B cell (primary cell): ENCODE measurements at regions of chr3 and their contacts with region 1.

Region 1: GRCh38 chr3:106255870-106256248 is 387.0 kb upstream of the CBLB start:
- DNase-seq: peak; percentile 83
- ATAC-seq: peak; percentile 97
- H3K4me3 ChIP-seq: peak overlapping the region in 4 of 5 experiments; percentile 59 to 71 (median 64)
- H3K4me3 Mint-ChIP-seq: peak overlapping the region; percentile 74
- H3K27ac ChIP-seq: peak overlapping the region; percentile 84 to 85
- H3K27ac Mint-ChIP-seq: peak overlapping the region; percentile 90
- H3K4me1 ChIP-seq: peaks cover 25 to 31% of the 10 kb centered on the region in 2 donors
- H3K4me1 Mint-ChIP-seq: peaks cover 38% of the 10 kb centered on the region
- H3K27me3 ChIP-seq: no peaks in the 10 kb centered on the region
- H3K27me3 Mint-ChIP-seq: no peaks in the 10 kb centered on the region
- CTCF ChIP-seq: no peak

Region 2: DNA sequence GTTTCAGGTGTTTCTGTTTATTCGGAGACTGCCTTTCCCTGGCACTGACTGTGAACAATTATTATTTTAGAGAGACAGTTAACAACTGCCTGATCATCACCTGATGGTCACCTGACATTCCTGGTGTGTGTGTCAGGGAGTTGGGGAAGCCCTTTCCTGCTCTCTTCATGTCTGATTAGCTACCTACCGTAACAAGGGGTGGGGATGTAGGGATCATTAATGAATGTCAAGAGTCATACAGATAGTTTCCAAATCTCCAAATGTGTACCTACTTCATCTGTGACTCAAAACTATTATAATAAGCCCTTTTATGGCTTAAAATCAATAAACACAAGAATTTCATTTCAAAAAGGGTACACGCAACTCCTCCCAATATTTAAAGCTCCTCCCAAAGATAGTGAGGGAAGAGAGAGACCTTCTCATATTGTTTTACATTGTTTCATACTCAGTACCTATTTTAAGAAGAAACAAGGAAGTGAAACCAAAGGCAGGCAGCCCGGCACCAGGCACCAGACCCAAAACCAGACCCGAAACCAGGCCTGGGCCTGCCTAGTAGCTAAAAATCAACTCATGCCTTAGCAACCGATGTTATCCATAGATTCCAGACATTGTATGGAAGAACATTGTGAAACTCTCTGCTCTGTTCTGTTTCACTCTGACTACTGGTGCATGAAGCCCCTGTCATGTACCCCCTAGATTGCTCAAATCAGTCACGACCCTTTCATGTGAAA is 1734.1 kb before region 1 on chr3:
- CTCF ChIA-PET with region 1: no interaction called
- POLR2A ChIA-PET with region 1: no interaction called
- intact Hi-C with region 1: loop called (anchors 10 kb)
- DNase-seq: peak; percentile 85
- ATAC-seq: peak; percentile 58
- H3K4me3 ChIP-seq: peak overlapping the region in 1 of 5 experiments; percentile 12
- H3K4me3 Mint-ChIP-seq: peak overlapping the region; percentile 82
- H3K27ac ChIP-seq: peak overlapping the region; percentile 93 to 98
- H3K27ac Mint-ChIP-seq: peak overlapping the region; percentile 98
- H3K4me1 ChIP-seq: peaks cover 70 to 71% of the 10 kb centered on the region in 2 donors
- H3K4me1 Mint-ChIP-seq: peaks cover 69% of the 10 kb centered on the region
- H3K27me3 ChIP-seq: no peaks in the 10 kb centered on the region
- H3K27me3 Mint-ChIP-seq: no peaks in the 10 kb centered on the region
- CTCF ChIP-seq: no peak

Region 3: GRCh38 chr3:105722943-105723556 is 532.8 kb before region 1 on chr3:
- CTCF ChIA-PET with region 1: no interaction called
- POLR2A ChIA-PET with region 1: no interaction called
- intact Hi-C with region 1: loop called (anchors 5 kb)
- DNase-seq: peak; percentile 77
- ATAC-seq: peak; percentile 96
- H3K4me3 ChIP-seq: peak overlapping the region in 1 of 5 experiments; percentile 29
- H3K4me3 Mint-ChIP-seq: peak overlapping the region; percentile 26
- H3K27ac ChIP-seq: peak overlapping the region in 1 of 2 donors; percentile 35
- H3K27ac Mint-ChIP-seq: peak overlapping the region; percentile 51
- H3K4me1 ChIP-seq: peaks cover 4 to 15% of the 10 kb centered on the region in 2 donors
- H3K4me1 Mint-ChIP-seq: peaks cover 18% of the 10 kb centered on the region
- H3K27me3 ChIP-seq: no peaks in the 10 kb centered on the region
- H3K27me3 Mint-ChIP-seq: no peaks in the 10 kb centered on the region
- CTCF ChIP-seq: no peak

Region 4: GRCh38 chr3:106176734-106177133 is 79.1 kb before region 1 on chr3:
- CTCF ChIA-PET with region 1: no interaction called
- POLR2A ChIA-PET with region 1: no interaction called
- intact Hi-C with region 1: loop called (anchors 5 kb)
- DNase-seq: peak; percentile 46
- ATAC-seq: peak; percentile 85
- H3K4me3 ChIP-seq: peak overlapping the region in 4 of 5 experiments; percentile 35 to 44 (median 38)
- H3K4me3 Mint-ChIP-seq: peak overlapping the region; percentile 83
- H3K27ac ChIP-seq: peak overlapping the region; percentile 30 to 68
- H3K27ac Mint-ChIP-seq: peak overlapping the region; percentile 78
- H3K4me1 ChIP-seq: peaks cover 7 to 20% of the 10 kb centered on the region in 2 donors
- H3K4me1 Mint-ChIP-seq: peaks cover 26% of the 10 kb centered on the region
- H3K27me3 ChIP-seq: no peaks in the 10 kb centered on the region
- H3K27me3 Mint-ChIP-seq: no peaks in the 10 kb centered on the region
- CTCF ChIP-seq: no peak

Region 5: DNA sequence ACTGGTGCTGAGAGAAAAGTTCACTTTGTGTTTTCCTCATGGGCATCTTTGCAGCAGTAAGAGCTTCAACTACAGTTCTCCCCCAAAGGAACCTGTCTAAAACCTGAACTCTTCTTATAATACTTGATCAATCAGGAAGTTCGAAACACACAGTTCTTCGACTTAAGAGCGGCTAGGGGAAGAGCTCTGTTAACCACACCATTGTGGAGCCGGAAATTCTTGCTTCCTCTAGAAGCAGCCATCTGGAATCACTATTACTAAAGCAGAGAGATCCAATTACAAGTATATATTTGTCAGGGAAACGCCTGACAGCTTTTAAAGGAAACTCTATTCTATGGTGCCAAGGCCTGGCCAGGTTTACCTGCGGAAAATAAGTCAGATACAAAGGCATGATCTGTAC is 49.7 kb before region 1 on chr3:
- CTCF ChIA-PET with region 1: interaction called, 3 read pairs
- POLR2A ChIA-PET with region 1: no interaction called
- intact Hi-C with region 1: loop called (anchors 10 kb)
- DNase-seq: peak; percentile 57
- ATAC-seq: peak; percentile 60
- H3K4me3 ChIP-seq: peak overlapping the region in 4 of 5 experiments; percentile 22 to 51 (median 34)
- H3K4me3 Mint-ChIP-seq: peak overlapping the region; percentile 68
- H3K27ac ChIP-seq: peak overlapping the region in 1 of 2 donors; percentile 31
- H3K27ac Mint-ChIP-seq: peak overlapping the region; percentile 42
- H3K4me1 ChIP-seq: peaks cover 15 to 23% of the 10 kb centered on the region in 2 donors
- H3K4me1 Mint-ChIP-seq: peaks cover 27% of the 10 kb centered on the region
- H3K27me3 ChIP-seq: no peaks in the 10 kb centered on the region
- H3K27me3 Mint-ChIP-seq: no peaks in the 10 kb centered on the region
- CTCF ChIP-seq: no peak